ENCODE measurements at regions of chr20 and their contacts with region 1.

Region 1: DNA sequence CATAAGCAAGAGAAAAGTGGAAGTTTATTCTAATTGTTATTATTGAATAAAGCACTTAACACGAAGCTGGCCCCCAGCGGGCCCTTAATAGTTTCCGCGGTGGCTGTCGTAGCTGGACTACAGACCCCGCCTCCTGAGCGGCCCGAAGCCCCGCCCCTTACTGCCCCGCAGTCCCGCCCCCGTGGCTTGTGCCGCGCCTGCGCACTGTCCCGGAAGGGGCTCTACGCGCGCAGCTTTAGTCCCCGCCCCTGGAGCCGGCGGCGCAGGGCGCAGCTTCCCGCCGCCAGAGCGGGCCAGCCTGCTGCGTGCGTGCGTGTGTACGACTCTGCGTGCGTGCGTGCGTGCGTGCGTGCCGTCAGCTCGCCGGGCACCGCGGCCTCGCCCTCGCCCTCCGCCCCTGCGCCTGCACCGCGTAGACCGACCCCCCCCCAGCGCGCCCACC is at the start of gene VAPB:
- DNase-seq: peak; percentile 99
- H3K4me3 Mint-ChIP-seq: peak within 1 kb of the TSS; percentile 89
- H3K27ac Mint-ChIP-seq: peak within 1 kb of the TSS; percentile 93
- H3K4me1 Mint-ChIP-seq: peaks cover 30% of the 10 kb centered on the region
- H3K27me3 Mint-ChIP-seq: peaks cover 12% of the 10 kb centered on the region
- total RNA-seq, gene VAPB: 35.0 and 36.5 TPM in 2 replicates

Region 2: GRCh38 chr20:58407966-58408557 is 19.2 kb after region 1 on chr20:
- intact Hi-C with region 1: loop called (anchors 2 kb)
- DNase-seq: peak; percentile 73
- H3K4me3 Mint-ChIP-seq: peak overlapping the region; percentile 50
- H3K27ac Mint-ChIP-seq: peak overlapping the region; percentile 51
- H3K4me1 Mint-ChIP-seq: peaks cover 31% of the 10 kb centered on the region
- H3K27me3 Mint-ChIP-seq: no peaks in the 10 kb centered on the region